CD8-positive, alpha-beta T cell (primary cell): ENCODE measurements at regions of chr3 and their contacts with region 1.

Region 1: GRCh38 chr3:171772427-171773056 is 37.7 kb downstream of the PLD1 start:
- DNase-seq: peak in 8 of 9 experiments; percentile 13 to 61 (median 40)
- ATAC-seq: peak; percentile 36
- H3K4me3 ChIP-seq: no peak overlapping the region
- H3K4me3 Mint-ChIP-seq: no peak overlapping the region
- H3K27ac ChIP-seq: no peak overlapping the region
- H3K27ac Mint-ChIP-seq: no peak overlapping the region
- H3K4me1 ChIP-seq: no peaks in the 10 kb centered on the region
- H3K4me1 Mint-ChIP-seq: no peaks in the 10 kb centered on the region
- H3K27me3 ChIP-seq: no peaks in the 10 kb centered on the region
- H3K27me3 Mint-ChIP-seq: peaks cover 5% of the 10 kb centered on the region
- CTCF ChIP-seq: peak; percentile 58

Region 2: GRCh38 chr3:170961616-170962400 is 810.7 kb before region 1 on chr3:
- CTCF ChIA-PET with region 1: interaction called, 24 read pairs
- POLR2A ChIA-PET with region 1: no interaction called
- intact Hi-C with region 1: loop called in 1 of 2 experiments (anchors 1 kb)
- DNase-seq: peak in 2 of 9 experiments; percentile 18 to 40
- ATAC-seq: no peak
- H3K4me3 ChIP-seq: no peak overlapping the region
- H3K4me3 Mint-ChIP-seq: no peak overlapping the region
- H3K27ac ChIP-seq: no peak overlapping the region
- H3K27ac Mint-ChIP-seq: no peak overlapping the region
- H3K4me1 ChIP-seq: no peaks in the 10 kb centered on the region
- H3K4me1 Mint-ChIP-seq: no peaks in the 10 kb centered on the region
- H3K27me3 ChIP-seq: peaks cover 0 to 2% of the 10 kb centered on the region in 2 experiments
- H3K27me3 Mint-ChIP-seq: no peaks in the 10 kb centered on the region
- CTCF ChIP-seq: peak; percentile 72

Region 3: GRCh38 chr3:171049861-171050444 is 722.6 kb before region 1 on chr3:
- CTCF ChIA-PET with region 1: interaction called, 18 read pairs
- POLR2A ChIA-PET with region 1: no interaction called
- intact Hi-C with region 1: loop called in 1 of 2 experiments (anchors 5 kb)
- DNase-seq: peak in 8 of 9 experiments; percentile 4 to 50 (median 26)
- ATAC-seq: peak; percentile 55
- H3K4me3 ChIP-seq: no peak overlapping the region
- H3K4me3 Mint-ChIP-seq: no peak overlapping the region
- H3K27ac ChIP-seq: no peak overlapping the region
- H3K27ac Mint-ChIP-seq: no peak overlapping the region
- H3K4me1 ChIP-seq: no peaks in the 10 kb centered on the region
- H3K4me1 Mint-ChIP-seq: no peaks in the 10 kb centered on the region
- H3K27me3 ChIP-seq: no peaks in the 10 kb centered on the region
- H3K27me3 Mint-ChIP-seq: peaks cover 11% of the 10 kb centered on the region
- CTCF ChIP-seq: peak; percentile 28

Region 4: GRCh38 chr3:171162986-171163723 is 609.4 kb before region 1 on chr3:
- CTCF ChIA-PET with region 1: interaction called, 6 read pairs
- POLR2A ChIA-PET with region 1: no interaction called
- intact Hi-C with region 1: loop called (anchors 2 to 5 kb)
- DNase-seq: peak in 3 of 9 experiments; percentile 9 to 58 (median 42)
- ATAC-seq: peak; percentile 34
- H3K4me3 ChIP-seq: no peak overlapping the region
- H3K4me3 Mint-ChIP-seq: no peak overlapping the region
- H3K27ac ChIP-seq: no peak overlapping the region
- H3K27ac Mint-ChIP-seq: no peak overlapping the region
- H3K4me1 ChIP-seq: no peaks in the 10 kb centered on the region
- H3K4me1 Mint-ChIP-seq: peaks cover 18% of the 10 kb centered on the region
- H3K27me3 ChIP-seq: no peaks in the 10 kb centered on the region
- H3K27me3 Mint-ChIP-seq: no peaks in the 10 kb centered on the region
- CTCF ChIP-seq: peak; percentile 77

Region 5: DNA sequence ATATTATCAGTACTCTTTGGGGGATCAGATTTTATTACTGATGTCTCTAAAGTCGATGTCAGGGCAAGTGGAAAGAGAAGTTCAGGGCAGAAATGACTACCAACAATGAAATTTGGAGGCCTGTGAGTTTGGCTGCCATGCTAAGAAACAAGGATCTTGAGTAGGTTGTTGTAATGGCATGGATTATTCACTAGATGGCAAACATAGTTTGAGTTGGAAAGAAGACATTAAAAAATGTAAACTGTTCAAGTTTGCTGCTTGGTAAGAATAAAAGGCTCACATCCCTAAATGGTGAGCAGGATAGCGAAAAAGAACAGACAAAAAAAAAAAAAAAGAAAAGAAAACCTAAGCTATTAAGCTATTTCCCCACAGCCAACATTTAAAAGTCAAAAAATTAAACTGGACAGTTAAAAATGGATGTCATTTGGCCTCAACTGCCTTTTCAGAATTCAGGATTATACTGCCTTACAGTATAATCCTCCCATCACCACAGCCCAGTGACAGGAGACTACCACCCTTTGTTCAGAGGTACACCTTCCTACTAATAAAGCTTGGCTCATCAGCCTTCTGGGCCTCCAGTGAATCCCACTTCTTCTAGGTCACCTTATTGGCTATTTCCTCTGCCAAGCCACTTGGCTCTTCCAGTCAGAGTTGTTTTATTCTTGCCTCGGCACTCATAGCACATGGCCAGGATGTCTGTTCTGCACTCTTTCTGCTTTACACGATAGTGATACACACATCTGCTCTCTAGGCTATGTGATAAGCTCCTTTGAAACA is 126.0 kb before region 1 on chr3:
- CTCF ChIA-PET with region 1: interaction called, 4 read pairs
- POLR2A ChIA-PET with region 1: no interaction called
- intact Hi-C with region 1: loop called in 1 of 2 experiments (anchors 10 kb)
- DNase-seq: peak in 2 of 9 experiments; percentile 29 to 42
- ATAC-seq: no peak
- H3K4me3 ChIP-seq: no peak overlapping the region
- H3K4me3 Mint-ChIP-seq: no peak overlapping the region
- H3K27ac ChIP-seq: no peak overlapping the region
- H3K27ac Mint-ChIP-seq: no peak overlapping the region
- H3K4me1 ChIP-seq: no peaks in the 10 kb centered on the region
- H3K4me1 Mint-ChIP-seq: no peaks in the 10 kb centered on the region
- H3K27me3 ChIP-seq: no peaks in the 10 kb centered on the region
- H3K27me3 Mint-ChIP-seq: no peaks in the 10 kb centered on the region
- CTCF ChIP-seq: peak; percentile 29

Region 6: GRCh38 chr3:171753665-171754408 is 18.7 kb before region 1 on chr3:
- CTCF ChIA-PET with region 1: interaction called, 14 read pairs
- POLR2A ChIA-PET with region 1: no interaction called
- intact Hi-C with region 1: no loop called
- DNase-seq: no peak
- ATAC-seq: no peak
- H3K4me3 ChIP-seq: no peak overlapping the region
- H3K4me3 Mint-ChIP-seq: no peak overlapping the region
- H3K27ac ChIP-seq: no peak overlapping the region
- H3K27ac Mint-ChIP-seq: no peak overlapping the region
- H3K4me1 ChIP-seq: no peaks in the 10 kb centered on the region
- H3K4me1 Mint-ChIP-seq: no peaks in the 10 kb centered on the region
- H3K27me3 ChIP-seq: peaks cover 0 to 8% of the 10 kb centered on the region in 2 experiments
- H3K27me3 Mint-ChIP-seq: peaks cover 9% of the 10 kb centered on the region
- CTCF ChIP-seq: no peak

Region 7: GRCh38 chr3:171806200-171807128 is 33.9 kb after region 1 on chr3:
- CTCF ChIA-PET with region 1: no interaction called
- POLR2A ChIA-PET with region 1: no interaction called
- intact Hi-C with region 1: no loop called
- DNase-seq: no peak
- ATAC-seq: no peak
- H3K4me3 ChIP-seq: no peak overlapping the region
- H3K4me3 Mint-ChIP-seq: no peak overlapping the region
- H3K27ac ChIP-seq: no peak overlapping the region
- H3K27ac Mint-ChIP-seq: no peak overlapping the region
- H3K4me1 ChIP-seq: peaks cover 6% of the 10 kb centered on the region
- H3K4me1 Mint-ChIP-seq: peaks cover 14% of the 10 kb centered on the region
- H3K27me3 ChIP-seq: no peaks in the 10 kb centered on the region
- H3K27me3 Mint-ChIP-seq: peaks cover 28% of the 10 kb centered on the region
- CTCF ChIP-seq: no peak

Region 8: GRCh38 chr3:172171396-172172075 is 399.0 kb after region 1 on chr3:
- CTCF ChIA-PET with region 1: no interaction called
- POLR2A ChIA-PET with region 1: no interaction called
- intact Hi-C with region 1: no loop called
- DNase-seq: no peak
- ATAC-seq: no peak
- H3K4me3 ChIP-seq: no peak overlapping the region
- H3K4me3 Mint-ChIP-seq: no peak overlapping the region
- H3K27ac ChIP-seq: no peak overlapping the region
- H3K27ac Mint-ChIP-seq: no peak overlapping the region
- H3K4me1 ChIP-seq: no peaks in the 10 kb centered on the region
- H3K4me1 Mint-ChIP-seq: peaks cover 7% of the 10 kb centered on the region
- H3K27me3 ChIP-seq: no peaks in the 10 kb centered on the region
- H3K27me3 Mint-ChIP-seq: no peaks in the 10 kb centered on the region
- CTCF ChIP-seq: no peak